Thyroid gland (tissue), 4 donors: ENCODE measurements at regions of chr17 and their contacts with region 1.

Region 1: DNA sequence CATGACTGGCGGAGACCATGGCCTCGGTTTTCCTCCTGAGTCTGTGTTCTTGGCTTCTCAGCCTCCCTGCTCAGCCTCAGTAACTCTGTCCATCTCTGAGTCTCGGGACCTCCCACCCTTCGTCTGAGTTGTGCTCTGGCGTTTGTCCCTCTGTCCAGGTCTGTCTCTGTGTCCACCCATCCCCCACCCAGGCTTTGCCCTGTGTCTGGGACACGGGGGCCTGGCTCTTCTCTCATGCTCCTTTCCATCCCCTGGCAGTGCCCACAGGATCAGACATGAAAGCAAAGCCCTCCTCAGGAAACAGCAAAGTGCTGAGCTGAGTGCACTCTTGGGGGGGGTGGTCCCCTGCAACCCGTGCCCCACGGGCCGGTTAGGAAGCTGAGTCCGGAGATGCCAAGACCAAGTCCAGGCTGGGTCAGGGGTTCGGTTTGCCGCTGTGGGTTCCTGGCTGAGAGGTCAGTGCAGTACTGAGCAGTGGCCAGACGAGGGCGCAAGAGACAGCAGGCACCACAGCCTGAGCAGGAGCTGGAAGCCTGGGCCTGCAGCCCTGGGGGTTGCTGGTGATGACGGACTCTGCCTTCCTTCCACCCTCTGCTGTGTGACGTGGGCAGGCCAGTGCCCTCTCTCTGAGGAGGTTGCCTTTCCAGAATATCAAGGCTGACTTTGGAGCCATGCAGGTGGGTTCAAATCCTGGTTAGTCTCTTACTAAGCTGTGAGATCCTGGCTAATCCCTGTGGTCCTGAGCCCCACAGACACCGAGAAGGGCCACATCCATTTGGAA is 2.5 kb downstream of the P2RX1 start:
- DNase-seq: peak; percentile 73 to 75
- H3K4me3 ChIP-seq: no peak overlapping the region
- H3K27ac ChIP-seq: no peak overlapping the region
- H3K4me1 ChIP-seq: peaks cover 0 to 13% of the 10 kb centered on the region in 2 donors
- H3K27me3 ChIP-seq: no peaks in the 10 kb centered on the region
- CTCF ChIP-seq: peak; percentile 83 to 98 (median 94)
- POLR2A ChIP-seq: no peak

Region 2: GRCh38 chr17:3683054-3683511 is 230.6 kb before region 1 on chr17:
- intact Hi-C with region 1: no loop called
- DNase-seq: peak in 1 of 2 donors; percentile 16
- H3K4me3 ChIP-seq: no peak overlapping the region
- H3K27ac ChIP-seq: no peak overlapping the region
- H3K4me1 ChIP-seq: no peaks in the 10 kb centered on the region
- H3K27me3 ChIP-seq: no peaks in the 10 kb centered on the region
- CTCF ChIP-seq: peak; percentile 58 to 90 (median 60)
- POLR2A ChIP-seq: no peak

Region 3: GRCh38 chr17:3859940-3860339 is 53.8 kb before region 1 on chr17:
- intact Hi-C with region 1: loop called (anchors 5 kb)
- DNase-seq: no peak
- H3K4me3 ChIP-seq: no peak overlapping the region
- H3K27ac ChIP-seq: no peak overlapping the region
- H3K4me1 ChIP-seq: peaks cover 3 to 4% of the 10 kb centered on the region in 2 donors
- H3K27me3 ChIP-seq: no peaks in the 10 kb centered on the region
- CTCF ChIP-seq: no peak
- POLR2A ChIP-seq: no peak